PC-3 (cell line): ENCODE measurements at regions of chr2 and their contacts with region 1.

Region 1: GRCh38 chr2:45844796-45845457 is 193.5 kb downstream of the PRKCE start:
- DNase-seq: no peak
- ATAC-seq: no peak
- H3K4me3 ChIP-seq: no peak overlapping the region
- H3K27ac ChIP-seq: no peak overlapping the region
- H3K4me1 ChIP-seq: peaks cover 9% of the 10 kb centered on the region; the same call in 1 of the 2 replicates
- H3K27me3 ChIP-seq: no peaks in the 10 kb centered on the region
- CTCF ChIP-seq: no peak

Region 2: DNA sequence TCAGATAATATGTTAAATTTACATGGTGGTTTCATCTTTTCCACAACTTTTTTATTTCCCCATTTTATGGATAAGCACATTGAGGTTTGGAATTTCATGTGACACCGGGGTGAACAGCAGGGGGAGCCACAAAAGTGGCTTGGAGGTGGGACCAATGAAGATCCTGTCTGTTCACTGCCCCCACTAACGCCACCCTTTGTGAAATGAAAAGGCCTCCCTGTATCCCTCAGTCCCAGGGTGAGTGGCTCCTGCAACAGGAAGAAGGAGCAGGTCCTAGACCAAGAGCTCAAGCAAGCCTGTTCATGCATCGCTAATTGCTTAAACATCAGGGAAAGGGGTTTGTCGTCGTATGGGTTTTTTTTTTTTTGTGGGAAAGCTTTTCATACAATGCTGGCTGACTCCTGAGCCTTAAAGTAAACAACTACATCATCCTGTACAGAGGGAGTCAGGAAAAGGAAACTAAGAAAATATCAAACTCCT is 184.4 kb after region 1 on chr2:
- CTCF ChIA-PET with region 1: no interaction called
- POLR2A ChIA-PET with region 1: no interaction called
- intact Hi-C with region 1: no loop called
- DNase-seq: peak; percentile 56
- ATAC-seq: peak; percentile 75
- H3K4me3 ChIP-seq: no peak overlapping the region
- H3K27ac ChIP-seq: 0 out of 2 replicates have a peak overlapping the region, but pooled peaks have one; percentile 7
- H3K4me1 ChIP-seq: peaks cover 28% of the 10 kb centered on the region
- H3K27me3 ChIP-seq: no peaks in the 10 kb centered on the region
- CTCF ChIP-seq: peak; percentile 63

Region 3: GRCh38 chr2:46329803-46330775 is 485.2 kb after region 1 on chr2:
- CTCF ChIA-PET with region 1: no interaction called
- POLR2A ChIA-PET with region 1: interaction called, 21 read pairs
- intact Hi-C with region 1: no loop called
- DNase-seq: peak; percentile 81
- ATAC-seq: peak; percentile 67
- H3K4me3 ChIP-seq: no peak overlapping the region
- H3K27ac ChIP-seq: peak overlapping the region; percentile 13; the same call in 1 of the 2 replicates
- H3K4me1 ChIP-seq: peaks cover 33% of the 10 kb centered on the region
- H3K27me3 ChIP-seq: no peaks in the 10 kb centered on the region
- CTCF ChIP-seq: no peak